Ovary (tissue), 10 donors: ENCODE measurements at regions of chr10 and their contacts with region 1.

Region 1: GRCh38 chr10:30529373-30529998 is 95.5 kb downstream of the MAP3K8 start:
- DNase-seq: peak in 2 of 5 donors; percentile 20 to 36
- H3K4me3 ChIP-seq: no peak overlapping the region
- H3K27ac ChIP-seq: no peak overlapping the region
- H3K4me1 ChIP-seq: no peaks in the 10 kb centered on the region
- H3K27me3 ChIP-seq: no peaks in the 10 kb centered on the region
- CTCF ChIP-seq: no peak
- EP300 ChIP-seq: no peak
- POLR2A ChIP-seq: no peak

Region 2: DNA sequence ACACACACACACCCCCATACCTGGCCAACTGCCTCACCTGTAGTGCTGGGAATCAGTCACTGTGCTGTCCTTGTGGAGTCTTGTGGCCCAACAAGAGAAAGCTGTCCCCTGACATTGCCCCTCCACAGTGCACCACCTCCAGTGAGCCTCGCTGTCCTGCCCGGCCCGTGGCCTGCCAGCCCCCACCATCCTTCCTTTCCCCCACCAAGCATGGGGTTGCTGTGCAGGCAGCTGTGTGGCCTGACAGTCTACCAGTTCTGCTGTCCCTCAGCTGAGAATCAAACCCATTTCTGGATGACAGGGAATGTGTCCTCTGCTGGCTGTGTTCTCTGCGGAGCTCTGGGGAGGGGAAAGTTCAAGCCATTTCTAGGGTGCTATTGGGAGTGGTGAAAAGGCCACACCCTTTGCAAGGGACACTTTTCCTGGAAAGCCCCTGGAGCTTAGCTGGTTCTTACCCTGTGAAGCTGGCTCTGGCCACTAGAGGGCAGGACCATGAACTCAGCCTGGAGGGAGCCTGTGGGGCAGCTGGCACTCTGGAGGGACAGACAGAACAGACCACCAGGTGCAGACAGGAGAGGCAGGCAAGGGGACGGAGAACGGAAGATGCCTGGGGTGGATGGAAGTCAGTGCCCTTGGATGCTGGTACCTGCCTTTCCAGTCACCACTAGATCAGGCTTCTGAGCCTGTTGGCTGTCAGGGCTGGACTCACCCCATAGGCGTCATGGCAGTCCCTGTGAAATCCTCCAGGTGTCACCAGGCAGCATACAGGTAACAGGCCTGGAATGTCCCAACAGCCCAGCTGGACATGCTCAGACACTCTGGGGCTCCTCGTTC is 169.9 kb before region 1 on chr10:
- intact Hi-C with region 1: no loop called
- DNase-seq: peak in 2 of 5 donors; percentile 39 to 56
- H3K4me3 ChIP-seq: no peak overlapping the region
- H3K27ac ChIP-seq: no peak overlapping the region
- H3K4me1 ChIP-seq: no peaks in the 10 kb centered on the region
- H3K27me3 ChIP-seq: no peaks in the 10 kb centered on the region
- CTCF ChIP-seq: peak in 1 of 3 donors; percentile 15
- EP300 ChIP-seq: no peak
- POLR2A ChIP-seq: no peak

Region 3: GRCh38 chr10:30415593-30415992 is 113.9 kb before region 1 on chr10:
- intact Hi-C with region 1: loop called in 2 of 4 experiments (anchors 2 to 5 kb)
- DNase-seq: no peak
- H3K4me3 ChIP-seq: no peak overlapping the region
- H3K27ac ChIP-seq: no peak overlapping the region
- H3K4me1 ChIP-seq: no peaks in the 10 kb centered on the region
- H3K27me3 ChIP-seq: no peaks in the 10 kb centered on the region
- CTCF ChIP-seq: no peak
- EP300 ChIP-seq: no peak
- POLR2A ChIP-seq: no peak

Region 4: DNA sequence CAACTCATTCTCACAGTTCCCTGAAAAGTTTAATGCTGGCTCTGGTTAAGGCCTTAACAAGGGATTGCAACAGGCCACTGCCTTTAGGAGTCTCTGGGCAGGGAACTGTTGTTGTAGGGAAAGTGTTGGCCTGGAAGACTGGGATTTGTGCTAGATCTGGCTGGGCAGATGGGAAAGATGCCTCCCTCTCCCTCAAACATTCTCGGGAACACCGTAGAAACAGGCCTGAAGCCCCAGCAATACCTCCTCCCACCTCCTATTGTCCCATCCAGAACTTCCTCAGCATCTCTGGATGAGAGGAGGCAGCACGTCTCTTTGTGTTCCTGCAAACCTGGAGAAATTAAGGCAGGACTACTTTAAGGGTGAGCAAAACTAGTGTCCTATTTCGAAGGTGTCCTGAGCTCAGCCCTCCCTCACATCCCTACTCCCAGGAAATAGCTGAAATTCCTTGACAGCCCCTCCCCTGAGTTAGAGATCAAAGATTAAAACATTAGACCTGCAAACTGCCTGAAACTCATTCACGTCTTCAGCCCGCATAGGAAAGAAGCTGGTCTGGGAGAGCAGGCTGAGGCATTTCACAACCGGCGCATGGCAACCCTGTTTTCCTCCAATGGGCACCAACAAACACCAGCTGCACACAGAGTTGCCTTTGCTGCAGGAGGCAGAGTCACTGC is 106.4 kb before region 1 on chr10:
- intact Hi-C with region 1: loop called in 1 of 4 experiments (anchors 5 kb)
- DNase-seq: peak in 1 of 5 donors; percentile 39
- H3K4me3 ChIP-seq: no peak overlapping the region
- H3K27ac ChIP-seq: peak overlapping the region in 1 of 2 donors; percentile 42
- H3K4me1 ChIP-seq: peaks cover 3% of the 10 kb centered on the region
- H3K27me3 ChIP-seq: no peaks in the 10 kb centered on the region
- CTCF ChIP-seq: no peak
- EP300 ChIP-seq: no peak
- POLR2A ChIP-seq: no peak